B cell (primary cell): ENCODE measurements at regions of chr18 and their contacts with region 1.

Region 1: GRCh38 chr18:8951491-8951890 is 151.0 kb upstream of the NDUFV2 start:
- DNase-seq: peak; percentile 60
- ATAC-seq: peak; percentile 77
- H3K4me3 ChIP-seq: peak overlapping the region in 2 of 5 experiments; percentile 3 to 46
- H3K4me3 Mint-ChIP-seq: peak overlapping the region; percentile 78
- H3K27ac ChIP-seq: peak overlapping the region; percentile 75 to 85
- H3K27ac Mint-ChIP-seq: peak overlapping the region; percentile 92
- H3K4me1 ChIP-seq: peaks cover 60 to 61% of the 10 kb centered on the region in 2 donors
- H3K4me1 Mint-ChIP-seq: peaks cover 69% of the 10 kb centered on the region
- H3K27me3 ChIP-seq: no peaks in the 10 kb centered on the region
- H3K27me3 Mint-ChIP-seq: no peaks in the 10 kb centered on the region
- CTCF ChIP-seq: no peak

Region 2: GRCh38 chr18:8835521-8835953 is 116.0 kb before region 1 on chr18:
- CTCF ChIA-PET with region 1: no interaction called
- POLR2A ChIA-PET with region 1: no interaction called
- intact Hi-C with region 1: no loop called
- DNase-seq: no peak
- ATAC-seq: no peak
- H3K4me3 ChIP-seq: no peak overlapping the region
- H3K4me3 Mint-ChIP-seq: no peak overlapping the region
- H3K27ac ChIP-seq: no peak overlapping the region
- H3K27ac Mint-ChIP-seq: no peak overlapping the region
- H3K4me1 ChIP-seq: no peaks in the 10 kb centered on the region
- H3K4me1 Mint-ChIP-seq: no peaks in the 10 kb centered on the region
- H3K27me3 ChIP-seq: no peaks in the 10 kb centered on the region
- H3K27me3 Mint-ChIP-seq: peaks cover 8% of the 10 kb centered on the region
- CTCF ChIP-seq: no peak

Region 3: GRCh38 chr18:8912348-8913326 is 38.9 kb before region 1 on chr18:
- CTCF ChIA-PET with region 1: no interaction called
- POLR2A ChIA-PET with region 1: interaction called, 7 read pairs
- intact Hi-C with region 1: loop called (anchors 2 kb)
- DNase-seq: peak; percentile 81
- ATAC-seq: peak; percentile 64
- H3K4me3 ChIP-seq: peak overlapping the region in 2 of 5 experiments; percentile 17 to 33
- H3K4me3 Mint-ChIP-seq: peak overlapping the region; percentile 88
- H3K27ac ChIP-seq: peak overlapping the region; percentile 96 to 98
- H3K27ac Mint-ChIP-seq: peak overlapping the region; percentile 99
- H3K4me1 ChIP-seq: peaks cover 51 to 54% of the 10 kb centered on the region in 2 donors
- H3K4me1 Mint-ChIP-seq: peaks cover 68% of the 10 kb centered on the region
- H3K27me3 ChIP-seq: no peaks in the 10 kb centered on the region
- H3K27me3 Mint-ChIP-seq: no peaks in the 10 kb centered on the region
- CTCF ChIP-seq: no peak

Region 4: GRCh38 chr18:8938817-8939216 is 12.7 kb before region 1 on chr18:
- CTCF ChIA-PET with region 1: no interaction called
- POLR2A ChIA-PET with region 1: no interaction called
- intact Hi-C with region 1: loop called (anchors 1 kb)
- DNase-seq: peak; percentile 32
- ATAC-seq: peak; percentile 53
- H3K4me3 ChIP-seq: no peak overlapping the region
- H3K4me3 Mint-ChIP-seq: no peak overlapping the region
- H3K27ac ChIP-seq: peak overlapping the region; percentile 26 to 63
- H3K27ac Mint-ChIP-seq: peak overlapping the region; percentile 59
- H3K4me1 ChIP-seq: peaks cover 16 to 22% of the 10 kb centered on the region in 2 donors
- H3K4me1 Mint-ChIP-seq: peaks cover 18% of the 10 kb centered on the region
- H3K27me3 ChIP-seq: no peaks in the 10 kb centered on the region
- H3K27me3 Mint-ChIP-seq: no peaks in the 10 kb centered on the region
- CTCF ChIP-seq: no peak

Region 5: GRCh38 chr18:9283791-9284190 is 332.3 kb after region 1 on chr18:
- CTCF ChIA-PET with region 1: no interaction called
- POLR2A ChIA-PET with region 1: no interaction called
- intact Hi-C with region 1: no loop called
- DNase-seq: no peak
- ATAC-seq: no peak
- H3K4me3 ChIP-seq: no peak overlapping the region
- H3K4me3 Mint-ChIP-seq: no peak overlapping the region
- H3K27ac ChIP-seq: no peak overlapping the region
- H3K27ac Mint-ChIP-seq: no peak overlapping the region
- H3K4me1 ChIP-seq: no peaks in the 10 kb centered on the region
- H3K4me1 Mint-ChIP-seq: no peaks in the 10 kb centered on the region
- H3K27me3 ChIP-seq: no peaks in the 10 kb centered on the region
- H3K27me3 Mint-ChIP-seq: no peaks in the 10 kb centered on the region
- CTCF ChIP-seq: no peak